WTC11 (cell line): ENCODE measurements at regions of chr16 and their contacts with region 1.

Region 1: DNA sequence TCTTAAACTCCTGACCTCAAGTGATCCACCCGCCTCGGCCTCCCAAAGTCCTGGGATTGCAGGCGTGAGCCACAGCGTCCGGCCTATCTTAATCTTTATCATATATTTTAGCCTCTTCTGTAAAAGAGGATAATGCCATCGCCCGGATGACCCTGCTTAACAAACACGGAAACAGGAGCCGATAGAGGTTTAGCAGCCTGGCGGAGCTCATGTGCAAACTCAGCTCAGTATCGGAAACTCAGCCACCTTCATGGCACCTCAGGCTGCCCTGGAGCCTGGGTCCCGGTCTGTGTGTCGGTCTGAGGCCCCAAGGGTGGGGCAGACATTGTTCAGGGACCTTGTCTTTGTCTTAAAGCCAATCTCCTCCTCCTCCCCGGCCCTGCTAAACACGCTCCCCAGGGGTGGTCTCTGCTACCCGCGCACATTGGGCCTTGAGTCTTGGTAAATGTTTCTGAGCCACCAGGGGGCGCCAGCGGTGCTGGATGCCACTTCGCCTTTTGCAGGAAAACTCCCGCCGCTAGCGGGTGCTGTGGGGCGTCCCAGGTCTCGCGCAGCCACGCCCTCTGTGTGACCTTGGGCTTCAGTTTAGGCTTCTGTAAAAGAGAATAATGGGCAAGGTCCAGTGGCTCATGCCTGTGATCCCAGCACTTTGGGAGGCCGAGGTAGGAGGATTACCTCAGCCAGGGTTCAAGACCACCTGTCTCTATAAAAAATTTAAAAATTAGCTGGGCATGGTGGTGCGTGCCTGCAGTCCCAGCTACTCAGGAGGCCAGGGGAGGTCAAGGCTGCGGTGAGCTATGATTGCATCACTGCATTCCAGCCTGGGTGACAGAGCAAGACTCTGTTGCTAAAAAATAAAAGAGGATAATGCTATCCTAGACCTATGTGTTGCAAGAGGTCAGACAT is 2.7 kb downstream of the CETP start:
- DNase-seq: peak; percentile 98
- ATAC-seq: peak; percentile 91
- H3K4me3 Mint-ChIP-seq: peak overlapping the region; percentile 18; the same call in 1 of the 2 replicates
- H3K27ac Mint-ChIP-seq: no peak overlapping the region
- H3K4me1 Mint-ChIP-seq: peaks cover 7% of the 10 kb centered on the region
- H3K27me3 Mint-ChIP-seq: no peaks in the 10 kb centered on the region
- CTCF ChIP-seq: peak; percentile 95

Region 2: DNA sequence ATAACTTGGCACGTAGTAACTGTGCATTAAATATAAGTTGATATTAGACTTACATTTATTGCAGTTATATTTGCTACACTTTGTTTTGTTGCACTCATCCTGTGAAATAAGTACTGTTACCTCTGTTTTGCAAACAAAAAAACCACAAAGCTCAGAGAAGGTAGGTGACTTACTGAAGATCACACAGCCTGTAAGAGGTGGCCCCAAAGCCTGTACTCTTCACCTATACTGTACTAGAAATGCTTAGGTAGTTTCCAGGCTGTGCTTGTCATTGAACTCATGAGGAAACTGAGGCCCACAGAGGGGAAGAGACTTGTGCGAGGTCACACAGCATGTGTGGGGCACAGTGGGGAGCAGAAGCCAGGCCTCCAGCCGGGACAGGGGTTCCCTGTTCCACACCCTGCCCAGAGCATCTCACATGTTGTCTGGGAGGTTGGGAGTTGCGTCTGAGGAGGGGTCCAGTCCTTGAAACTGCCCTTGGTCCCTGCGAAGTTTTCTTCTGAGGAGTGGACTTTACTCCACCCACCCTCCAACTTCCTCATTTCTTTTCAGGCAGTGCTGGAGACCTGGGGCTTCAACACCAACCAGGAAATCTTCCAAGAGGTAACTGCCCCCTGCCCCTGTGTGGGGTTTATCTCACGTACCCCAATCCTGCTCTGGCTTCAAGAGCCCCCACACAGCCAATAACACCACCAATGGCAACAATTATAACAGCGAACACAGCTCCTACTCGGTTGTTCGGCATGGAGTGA is 10.2 kb after region 1 on chr16:
- CTCF ChIA-PET with region 1: interaction called, 22 read pairs
- POLR2A ChIA-PET with region 1: no interaction called
- DNase-seq: no peak
- ATAC-seq: no peak
- H3K4me3 Mint-ChIP-seq: no peak overlapping the region
- H3K27ac Mint-ChIP-seq: no peak overlapping the region
- H3K4me1 Mint-ChIP-seq: no peaks in the 10 kb centered on the region
- H3K27me3 Mint-ChIP-seq: no peaks in the 10 kb centered on the region
- CTCF ChIP-seq: no peak

Region 3: DNA sequence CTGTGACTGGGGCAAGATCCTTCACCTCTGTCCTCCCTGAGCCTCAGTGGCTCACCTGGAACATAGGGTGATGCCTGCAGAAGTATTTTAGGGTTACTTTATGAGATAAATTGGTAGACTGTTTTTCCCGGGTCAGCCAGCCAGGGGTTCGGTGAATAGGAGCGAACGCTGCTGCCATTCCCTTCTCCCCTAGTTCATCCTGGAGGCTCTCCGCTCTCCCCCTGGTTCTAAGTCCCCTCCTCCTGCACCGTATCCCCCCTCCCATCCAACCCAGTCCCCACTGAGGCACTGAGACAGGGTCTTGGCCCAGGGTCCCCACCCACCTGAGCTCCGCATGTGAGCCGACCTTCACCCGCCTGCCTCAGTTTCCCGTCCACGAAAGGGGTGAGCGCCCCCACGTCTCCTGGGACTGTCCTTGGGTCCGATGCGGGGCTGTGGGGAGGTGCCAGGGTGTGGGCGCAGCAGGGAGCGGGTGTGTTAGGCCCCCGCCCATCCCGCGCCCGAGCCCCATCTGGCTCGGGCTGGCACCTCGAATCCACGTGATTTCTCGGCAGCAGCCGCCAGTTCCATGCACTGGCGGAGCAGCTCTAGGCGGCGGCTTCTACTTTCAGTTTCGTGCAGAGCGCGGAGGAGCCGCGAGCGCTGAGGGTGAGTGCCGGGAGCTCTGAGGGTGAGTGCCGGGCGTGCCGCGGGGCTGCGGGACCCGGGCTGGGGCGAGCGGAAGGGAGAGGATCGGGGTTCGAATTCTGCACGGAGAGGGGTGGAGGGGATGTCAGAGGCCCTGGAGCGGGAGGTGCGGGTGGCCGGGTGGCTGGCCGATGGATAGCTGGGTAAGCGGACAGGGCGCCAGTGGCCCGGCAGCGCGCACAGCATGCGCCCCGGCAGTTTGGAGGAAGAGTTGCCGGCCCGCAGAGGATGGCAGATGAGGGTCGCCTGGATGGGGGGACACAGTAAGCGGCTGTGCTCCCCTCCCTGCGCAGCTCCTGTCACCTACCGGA is 24.8 kb after region 1 on chr16 and contains the start of gene NLRC5:
- CTCF ChIA-PET with region 1: interaction called, 11 read pairs
- POLR2A ChIA-PET with region 1: no interaction called
- DNase-seq: peak; percentile 68
- ATAC-seq: peak; percentile 86
- H3K4me3 Mint-ChIP-seq: peak within 1 kb of the TSS; percentile 84
- H3K27ac Mint-ChIP-seq: no peak within 1 kb of the TSS
- H3K4me1 Mint-ChIP-seq: peaks cover 25% of the 10 kb centered on the region
- H3K27me3 Mint-ChIP-seq: peaks cover 44% of the 10 kb centered on the region
- CTCF ChIP-seq: no peak
- total RNA-seq, gene NLRC5: 2.6 to 2.8 TPM (median 2.7 TPM) in 3 replicates

Region 4: GRCh38 chr16:57039148-57039812 is 74.8 kb after region 1 on chr16:
- CTCF ChIA-PET with region 1: interaction called, 13 read pairs
- POLR2A ChIA-PET with region 1: no interaction called
- DNase-seq: no peak
- ATAC-seq: no peak
- H3K4me3 Mint-ChIP-seq: no peak overlapping the region
- H3K27ac Mint-ChIP-seq: no peak overlapping the region
- H3K4me1 Mint-ChIP-seq: 0 out of 2 replicates have a peak, but pooled peaks cover 6% of the 10 kb centered on the region
- H3K27me3 Mint-ChIP-seq: no peaks in the 10 kb centered on the region; the same call in 1 of the 2 replicates
- CTCF ChIP-seq: no peak

Region 5: GRCh38 chr16:57204675-57205074 is 240.2 kb after region 1 on chr16:
- CTCF ChIA-PET with region 1: no interaction called
- POLR2A ChIA-PET with region 1: no interaction called
- DNase-seq: peak; percentile 30
- ATAC-seq: peak; percentile 89
- H3K4me3 Mint-ChIP-seq: no peak overlapping the region
- H3K27ac Mint-ChIP-seq: no peak overlapping the region
- H3K4me1 Mint-ChIP-seq: no peaks in the 10 kb centered on the region
- H3K27me3 Mint-ChIP-seq: no peaks in the 10 kb centered on the region
- CTCF ChIP-seq: 0 out of 2 replicates have a peak, but pooled peaks have one; percentile 22